ENCODE measurements at regions of chr19 and their contacts with region 1.

Region 1: GRCh38 chr19:8575467-8575997 is 1.7 kb downstream of the MYO1F start:
- DNase-seq: peak in 8 of 9 donors; percentile 40 to 65 (median 52)
- ATAC-seq: peak; percentile 46
- H3K4me3 ChIP-seq: peak overlapping the region; percentile 53
- H3K4me3 Mint-ChIP-seq: peak overlapping the region; percentile 80 to 97 (median 84)
- H3K27ac ChIP-seq: no peak overlapping the region
- H3K27ac Mint-ChIP-seq: peak overlapping the region in 8 of 9 donors; percentile 17 to 98 (median 80)
- H3K4me1 ChIP-seq: peaks cover 55 to 73% of the 10 kb centered on the region in 2 donors
- H3K4me1 Mint-ChIP-seq: peaks cover 60 to 81% (median 72%) of the 10 kb centered on the region in 7 donors
- H3K27me3 ChIP-seq: no peaks in the 10 kb centered on the region
- H3K27me3 Mint-ChIP-seq: peaks cover 0 to 3% (median 0%) of the 10 kb centered on the region in 5 donors

Region 2: DNA sequence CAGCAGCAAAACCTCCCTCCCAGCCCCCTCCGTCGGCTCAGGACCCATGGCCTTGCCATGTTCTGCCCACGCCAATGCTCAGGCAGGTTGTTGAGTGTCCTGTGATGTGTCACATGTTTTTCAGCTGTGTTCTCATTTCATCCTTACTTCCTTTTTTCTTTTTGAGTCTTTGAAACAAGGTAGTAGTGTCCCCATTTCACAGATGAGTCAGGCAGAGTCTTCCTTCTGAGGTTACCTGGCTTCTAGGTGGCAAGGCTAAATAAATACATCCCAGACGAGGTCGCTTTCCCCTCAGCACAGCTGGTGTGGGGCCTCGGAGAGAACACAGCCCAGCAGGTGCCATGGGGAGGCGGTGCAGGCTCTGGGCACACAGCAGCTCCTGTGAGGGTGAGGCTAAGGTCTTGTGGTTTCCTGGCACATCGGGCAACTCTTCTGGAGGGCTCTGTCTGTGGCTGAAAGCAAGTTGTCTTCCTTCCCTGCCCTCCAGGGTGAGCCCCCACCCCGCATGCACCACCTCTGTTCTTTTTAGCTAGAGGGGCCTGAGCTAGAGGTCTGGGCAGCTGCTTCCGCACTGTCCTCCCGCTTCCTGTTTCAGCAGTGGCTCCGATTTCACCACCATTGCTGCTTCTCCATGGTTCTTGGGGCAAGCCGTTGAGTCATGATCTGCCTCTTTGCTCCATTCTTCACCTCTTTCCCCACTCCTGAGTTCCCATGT is 88.2 kb before region 1 on chr19:
- CTCF ChIA-PET with region 1: interaction called, 84 read pairs
- POLR2A ChIA-PET with region 1: interaction called, 10 read pairs
- intact Hi-C with region 1: loop called in 1 of 2 experiments (anchors 1 kb)
- DNase-seq: peak; percentile 38 to 73 (median 59)
- ATAC-seq: peak; percentile 79
- H3K4me3 ChIP-seq: no peak overlapping the region
- H3K4me3 Mint-ChIP-seq: peak overlapping the region; percentile 33 to 85 (median 68)
- H3K27ac ChIP-seq: peak overlapping the region; percentile 48
- H3K27ac Mint-ChIP-seq: peak overlapping the region; percentile 82 to 95 (median 90)
- H3K4me1 ChIP-seq: peaks cover 15 to 26% of the 10 kb centered on the region in 2 donors
- H3K4me1 Mint-ChIP-seq: peaks cover 29 to 47% (median 34%) of the 10 kb centered on the region in 7 donors
- H3K27me3 ChIP-seq: no peaks in the 10 kb centered on the region
- H3K27me3 Mint-ChIP-seq: no peaks in the 10 kb centered on the region